Activated CD8-positive, alpha-beta T cell treated with anti-CD3 and anti-CD28 coated beads for 36 hours (primary cell): ENCODE measurements at regions of chr12 and their contacts with region 1.

Region 1: GRCh38 chr12:108618079-108618952 is 15.4 kb downstream of the SELPLG start:
- DNase-seq: peak; percentile 83
- ATAC-seq: peak; percentile 19
- H3K4me3 Mint-ChIP-seq: no peak overlapping the region
- H3K27ac Mint-ChIP-seq: peak overlapping the region; percentile 45
- H3K4me1 Mint-ChIP-seq: peaks cover 47% of the 10 kb centered on the region
- H3K27me3 Mint-ChIP-seq: no peaks in the 10 kb centered on the region
- CTCF ChIP-seq: peak; percentile 99

Region 2: DNA sequence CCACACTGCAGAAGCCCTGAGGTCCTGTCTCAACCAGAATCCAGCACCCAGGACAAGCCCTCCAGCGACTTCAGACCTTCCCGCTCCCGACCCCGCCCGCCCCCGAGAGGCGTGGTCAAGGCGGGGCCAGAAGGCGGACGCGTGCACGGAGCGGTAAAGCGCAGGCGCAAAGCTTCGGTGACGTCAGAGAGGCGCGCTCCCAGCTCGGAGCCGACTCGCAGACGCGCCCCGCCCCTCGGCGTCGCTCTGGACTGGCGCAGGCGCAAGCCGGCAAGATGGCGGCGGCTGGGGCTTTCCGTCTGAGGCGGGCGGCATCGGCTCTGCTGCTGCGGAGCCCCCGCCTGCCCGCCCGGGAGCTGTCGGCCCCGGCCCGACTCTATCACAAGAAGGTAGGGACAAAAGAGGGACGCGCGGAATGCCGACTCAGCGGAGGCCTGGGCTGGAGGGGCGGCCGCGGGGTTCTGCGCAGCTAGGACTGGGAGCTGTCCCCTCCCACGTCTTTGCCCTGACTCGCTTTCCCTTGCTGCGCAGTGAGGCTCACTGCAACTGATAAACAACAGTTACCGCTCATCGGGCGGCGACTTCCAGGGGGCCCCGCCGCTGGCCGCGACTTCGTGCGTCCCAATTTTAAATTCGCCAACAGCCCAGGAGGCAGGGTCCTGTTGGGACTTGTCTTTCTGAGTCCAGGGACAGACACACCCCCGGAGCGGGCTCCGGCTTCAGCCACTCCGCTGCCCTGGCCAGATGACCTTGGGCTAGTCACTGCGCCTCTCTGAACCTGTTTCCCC is 55.8 kb before region 1 on chr12 and contains the start of gene ISCU:
- CTCF ChIA-PET with region 1: interaction called, 645 read pairs
- POLR2A ChIA-PET with region 1: interaction called, 78 read pairs
- intact Hi-C with region 1: loop called (anchors 1 kb)
- DNase-seq: peak; percentile 97
- ATAC-seq: peak; percentile 76
- H3K4me3 Mint-ChIP-seq: peak within 1 kb of the TSS; percentile 99
- H3K27ac Mint-ChIP-seq: peak within 1 kb of the TSS; percentile 100
- H3K4me1 Mint-ChIP-seq: peaks cover 55% of the 10 kb centered on the region
- H3K27me3 Mint-ChIP-seq: no peaks in the 10 kb centered on the region
- CTCF ChIP-seq: no peak
- total RNA-seq, gene ISCU: 69.4 to 70.5 TPM

Region 3: GRCh38 chr12:108586306-108586705 is 32.0 kb before region 1 on chr12:
- CTCF ChIA-PET with region 1: interaction called, 10 read pairs
- POLR2A ChIA-PET with region 1: interaction called, 4 read pairs
- intact Hi-C with region 1: no loop called
- DNase-seq: no peak
- ATAC-seq: no peak
- H3K4me3 Mint-ChIP-seq: no peak overlapping the region
- H3K27ac Mint-ChIP-seq: no peak overlapping the region
- H3K4me1 Mint-ChIP-seq: no peaks in the 10 kb centered on the region
- H3K27me3 Mint-ChIP-seq: no peaks in the 10 kb centered on the region
- CTCF ChIP-seq: no peak

Region 4: DNA sequence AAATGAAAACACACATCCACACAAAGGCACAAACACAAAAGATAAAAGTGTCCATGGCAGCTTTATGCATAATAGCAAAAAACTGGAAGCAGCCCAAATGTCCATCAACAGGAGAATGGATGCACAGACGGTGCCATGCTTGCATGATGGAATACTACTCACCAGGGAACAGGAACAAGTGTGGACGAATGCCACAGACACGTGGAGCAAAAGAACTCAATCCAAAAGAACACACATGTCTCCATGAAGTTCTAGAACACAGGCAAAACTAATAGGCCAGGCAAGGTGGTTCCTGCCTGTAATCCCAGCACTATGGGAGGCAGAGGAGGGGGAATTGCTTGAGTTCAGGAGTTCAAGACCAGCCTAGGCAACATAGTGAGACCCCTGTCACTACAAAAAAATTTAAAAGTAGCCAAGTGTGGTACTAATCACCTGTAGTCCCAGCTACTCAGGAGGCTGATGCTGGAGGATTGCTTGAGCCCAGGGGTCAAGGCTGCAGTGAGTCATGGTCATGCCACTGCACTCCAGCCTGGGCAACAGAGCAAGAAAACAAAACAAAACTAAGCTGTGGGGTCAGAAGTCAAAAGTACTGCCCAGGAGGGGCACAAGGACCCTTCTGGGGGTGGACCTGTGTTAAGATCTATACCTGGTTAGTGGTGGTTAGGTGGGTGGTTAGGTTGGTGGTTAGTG is 13.2 kb before region 1 on chr12:
- CTCF ChIA-PET with region 1: interaction called, 13 read pairs
- POLR2A ChIA-PET with region 1: interaction called, 4 read pairs
- intact Hi-C with region 1: no loop called
- DNase-seq: no peak
- ATAC-seq: peak; percentile 30
- H3K4me3 Mint-ChIP-seq: peak overlapping the region; percentile 45
- H3K27ac Mint-ChIP-seq: peak overlapping the region; percentile 52
- H3K4me1 Mint-ChIP-seq: no peaks in the 10 kb centered on the region
- H3K27me3 Mint-ChIP-seq: peaks cover 1% of the 10 kb centered on the region
- CTCF ChIP-seq: no peak

Region 5: DNA sequence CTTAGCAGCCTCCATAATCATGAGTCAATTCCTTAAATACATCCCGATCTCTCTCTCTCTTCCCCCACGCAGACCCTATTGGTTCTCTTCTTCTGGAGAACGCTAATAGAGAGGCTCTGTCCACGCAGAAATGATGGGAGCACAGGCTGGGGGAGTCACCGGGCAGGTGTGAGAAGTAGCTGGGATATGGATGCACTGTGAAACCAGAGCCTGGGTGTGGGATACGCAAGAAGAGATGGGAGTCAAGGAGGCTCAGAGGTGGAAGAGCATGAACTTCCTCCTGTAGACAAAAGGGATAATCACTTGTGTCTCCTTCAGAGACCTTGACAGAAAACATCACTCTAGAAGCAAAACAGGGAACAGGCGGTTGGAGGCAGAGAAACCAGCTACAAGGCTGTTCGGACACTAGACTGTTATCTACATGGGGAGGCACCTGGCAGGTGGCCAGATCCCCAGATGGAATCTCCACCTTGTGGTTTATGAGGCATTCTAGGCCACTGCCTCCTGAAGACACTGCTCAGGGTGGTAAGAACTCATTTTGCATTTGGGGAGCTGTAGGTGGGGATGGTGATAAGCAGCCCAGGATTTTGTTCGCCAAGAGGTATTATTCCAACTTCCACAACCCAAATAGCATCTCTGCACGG is 22.6 kb after region 1 on chr12:
- CTCF ChIA-PET with region 1: interaction called, 245 read pairs
- POLR2A ChIA-PET with region 1: interaction called, 134 read pairs
- intact Hi-C with region 1: no loop called
- DNase-seq: no peak
- ATAC-seq: no peak
- H3K4me3 Mint-ChIP-seq: no peak overlapping the region
- H3K27ac Mint-ChIP-seq: no peak overlapping the region
- H3K4me1 Mint-ChIP-seq: peaks cover 30% of the 10 kb centered on the region
- H3K27me3 Mint-ChIP-seq: no peaks in the 10 kb centered on the region
- CTCF ChIP-seq: no peak

Region 6: DNA sequence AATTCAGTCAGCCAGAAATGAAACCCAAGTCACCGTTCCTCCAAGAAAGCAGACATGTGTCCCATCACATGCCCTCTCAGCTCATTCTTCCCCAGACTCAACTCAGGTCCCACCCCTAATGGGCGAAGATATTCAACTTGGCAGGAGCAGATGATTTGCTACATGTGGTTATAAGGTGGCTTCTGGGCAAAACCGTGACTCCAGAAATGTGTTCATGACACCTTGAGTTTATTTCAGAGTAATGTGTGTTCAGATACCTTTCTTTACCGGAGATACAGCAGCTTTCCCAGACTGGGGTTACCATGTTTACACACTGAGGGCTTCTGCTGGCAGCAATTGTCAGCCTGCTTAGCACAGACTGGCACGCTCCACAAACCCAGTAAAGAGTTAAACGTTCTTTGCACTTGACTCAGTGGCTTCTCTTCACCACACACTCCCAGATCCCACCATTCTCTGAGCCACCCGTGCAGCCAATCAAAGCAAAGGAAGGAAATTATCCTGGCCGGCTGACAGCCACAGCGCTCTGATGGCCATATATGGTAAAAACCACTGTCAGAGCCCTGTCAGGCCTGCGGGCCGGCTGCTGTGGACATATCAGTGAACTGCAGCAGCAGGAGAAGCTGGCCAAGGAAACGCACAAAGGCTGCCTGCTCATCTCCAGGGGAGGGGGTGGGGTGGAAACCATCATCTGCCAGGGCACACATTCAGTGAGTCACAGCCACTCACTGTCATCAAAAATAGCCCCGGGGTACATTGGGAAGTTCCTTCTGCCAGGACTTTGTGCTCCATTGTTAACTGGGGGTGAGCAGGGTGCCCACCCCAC is 73.1 kb after region 1 on chr12:
- CTCF ChIA-PET with region 1: interaction called, 14 read pairs
- POLR2A ChIA-PET with region 1: interaction called, 3 read pairs
- intact Hi-C with region 1: no loop called
- DNase-seq: peak; percentile 95
- ATAC-seq: peak; percentile 81
- H3K4me3 Mint-ChIP-seq: peak overlapping the region; percentile 63
- H3K27ac Mint-ChIP-seq: peak overlapping the region; percentile 86
- H3K4me1 Mint-ChIP-seq: peaks cover 68% of the 10 kb centered on the region
- H3K27me3 Mint-ChIP-seq: no peaks in the 10 kb centered on the region
- CTCF ChIP-seq: peak; percentile 41

Region 7: GRCh38 chr12:108750526-108751402 is 132.4 kb after region 1 on chr12:
- CTCF ChIA-PET with region 1: no interaction called
- POLR2A ChIA-PET with region 1: no interaction called
- intact Hi-C with region 1: no loop called
- DNase-seq: no peak
- ATAC-seq: no peak
- H3K4me3 Mint-ChIP-seq: no peak overlapping the region
- H3K27ac Mint-ChIP-seq: no peak overlapping the region
- H3K4me1 Mint-ChIP-seq: no peaks in the 10 kb centered on the region
- H3K27me3 Mint-ChIP-seq: no peaks in the 10 kb centered on the region
- CTCF ChIP-seq: no peak